IMR-90 (cell line): ENCODE measurements at regions of chr1 and their contacts with region 1.

Region 1: GRCh38 chr1:17768651-17769241 is 13.6 kb downstream of the ACTL8 start:
- DNase-seq: peak; percentile 92
- ATAC-seq: peak; percentile 78
- H3K4me3 ChIP-seq: no peak overlapping the region
- H3K27ac ChIP-seq: peak overlapping the region; percentile 86
- H3K4me1 ChIP-seq: peaks cover 27% of the 10 kb centered on the region
- H3K27me3 ChIP-seq: no peaks in the 10 kb centered on the region
- CTCF ChIP-seq: no peak
- POLR2A ChIP-seq: no peak
- RAD21 ChIP-seq: no peak

Region 2: GRCh38 chr1:17606826-17607440 is 161.8 kb before region 1 on chr1:
- CTCF ChIA-PET with region 1: no interaction called
- POLR2A ChIA-PET with region 1: no interaction called
- dilution Hi-C with region 1: no loop called
- in situ Hi-C with region 1: no loop called
- intact Hi-C with region 1: no loop called
- DNase-seq: peak; percentile 60
- ATAC-seq: peak; percentile 79
- H3K4me3 ChIP-seq: no peak overlapping the region
- H3K27ac ChIP-seq: no peak overlapping the region
- H3K4me1 ChIP-seq: peaks cover 6% of the 10 kb centered on the region
- H3K27me3 ChIP-seq: no peaks in the 10 kb centered on the region
- CTCF ChIP-seq: peak; percentile 94
- POLR2A ChIP-seq: no peak
- RAD21 ChIP-seq: peak; percentile 98

Region 3: GRCh38 chr1:17700945-17701810 is 67.6 kb before region 1 on chr1:
- CTCF ChIA-PET with region 1: no interaction called
- POLR2A ChIA-PET with region 1: interaction called, 12 read pairs
- dilution Hi-C with region 1: no loop called
- in situ Hi-C with region 1: no loop called
- intact Hi-C with region 1: no loop called
- DNase-seq: no peak
- ATAC-seq: no peak
- H3K4me3 ChIP-seq: no peak overlapping the region
- H3K27ac ChIP-seq: no peak overlapping the region
- H3K4me1 ChIP-seq: peaks cover 1% of the 10 kb centered on the region; the same call in 1 of the 2 replicates
- H3K27me3 ChIP-seq: peaks cover 8% of the 10 kb centered on the region; the same call in 1 of the 2 replicates
- CTCF ChIP-seq: no peak
- POLR2A ChIP-seq: no peak
- RAD21 ChIP-seq: no peak

Region 4: DNA sequence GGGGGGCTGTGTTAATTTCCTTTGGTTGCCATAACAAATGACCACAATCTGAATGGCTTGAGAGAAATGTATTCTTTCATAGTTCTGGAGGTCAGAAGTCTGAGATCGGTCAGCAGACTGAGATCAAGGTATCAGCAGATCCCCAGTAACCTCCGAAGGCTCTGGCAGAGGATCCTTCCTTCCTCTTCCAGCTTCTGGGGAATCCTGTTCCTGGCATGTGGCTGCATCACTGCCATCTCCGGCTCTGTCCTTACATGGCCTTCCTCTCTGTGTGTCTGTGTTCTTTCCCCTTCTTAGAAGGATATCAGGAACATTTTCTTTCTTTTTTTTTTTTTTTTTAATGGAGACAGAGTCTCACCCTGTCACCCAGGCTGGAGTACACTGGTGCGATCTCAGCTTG is 12.2 kb after region 1 on chr1:
- CTCF ChIA-PET with region 1: no interaction called
- POLR2A ChIA-PET with region 1: no interaction called
- dilution Hi-C with region 1: no loop called
- in situ Hi-C with region 1: no loop called
- intact Hi-C with region 1: no loop called
- DNase-seq: no peak
- ATAC-seq: no peak
- H3K4me3 ChIP-seq: no peak overlapping the region
- H3K27ac ChIP-seq: no peak overlapping the region
- H3K4me1 ChIP-seq: no peaks in the 10 kb centered on the region
- H3K27me3 ChIP-seq: peaks cover 15% of the 10 kb centered on the region
- CTCF ChIP-seq: no peak
- POLR2A ChIP-seq: no peak
- RAD21 ChIP-seq: no peak

Region 5: GRCh38 chr1:17865912-17866739 is 97.4 kb after region 1 on chr1:
- CTCF ChIA-PET with region 1: no interaction called
- POLR2A ChIA-PET with region 1: no interaction called
- dilution Hi-C with region 1: no loop called
- in situ Hi-C with region 1: no loop called
- intact Hi-C with region 1: loop called (anchors 2 kb)
- DNase-seq: peak; percentile 95
- ATAC-seq: peak; percentile 90
- H3K4me3 ChIP-seq: no peak overlapping the region
- H3K27ac ChIP-seq: peak overlapping the region; percentile 95
- H3K4me1 ChIP-seq: peaks cover 26% of the 10 kb centered on the region
- H3K27me3 ChIP-seq: no peaks in the 10 kb centered on the region
- CTCF ChIP-seq: no peak
- POLR2A ChIP-seq: no peak
- RAD21 ChIP-seq: no peak

Region 6: DNA sequence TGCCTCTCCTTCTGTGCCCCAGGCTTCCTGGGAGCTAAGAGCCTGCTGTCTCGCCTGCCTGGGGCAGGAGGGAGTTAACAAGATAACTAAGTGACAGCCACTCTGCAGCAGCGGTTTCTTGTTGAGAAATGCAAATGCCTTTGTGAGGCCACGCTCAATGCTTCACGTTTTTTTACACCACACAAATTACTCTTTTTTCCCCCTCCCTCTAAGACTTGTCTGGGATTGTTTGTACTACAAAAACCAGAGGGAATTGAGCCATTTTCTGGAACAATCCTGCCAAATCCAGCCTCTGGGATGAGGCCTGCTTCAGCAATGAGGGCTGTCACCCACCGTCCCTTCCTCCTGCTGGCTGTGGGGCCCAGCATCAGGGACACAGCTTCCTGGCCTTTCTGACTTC is 106.0 kb after region 1 on chr1:
- CTCF ChIA-PET with region 1: no interaction called
- POLR2A ChIA-PET with region 1: no interaction called
- dilution Hi-C with region 1: no loop called
- in situ Hi-C with region 1: no loop called
- intact Hi-C with region 1: loop called (anchors 2 kb)
- DNase-seq: peak; percentile 90
- ATAC-seq: peak; percentile 65
- H3K4me3 ChIP-seq: no peak overlapping the region
- H3K27ac ChIP-seq: peak overlapping the region; percentile 99
- H3K4me1 ChIP-seq: peaks cover 41% of the 10 kb centered on the region
- H3K27me3 ChIP-seq: no peaks in the 10 kb centered on the region
- CTCF ChIP-seq: no peak
- POLR2A ChIP-seq: no peak
- RAD21 ChIP-seq: no peak